ENCODE measurements at regions of chr10 and their contacts with region 1.

Region 1: GRCh38 chr10:72260588-72261322 is 13.0 kb upstream of the DDIT4 start:
- DNase-seq: peak; percentile 98
- ATAC-seq: peak; percentile 88
- H3K4me3 Mint-ChIP-seq: peak overlapping the region; percentile 64
- H3K27ac Mint-ChIP-seq: peak overlapping the region; percentile 99
- H3K4me1 Mint-ChIP-seq: peaks cover 70% of the 10 kb centered on the region
- H3K27me3 Mint-ChIP-seq: no peaks in the 10 kb centered on the region; the same call in 1 of the 2 replicates
- CTCF ChIP-seq: no peak

Region 2: DNA sequence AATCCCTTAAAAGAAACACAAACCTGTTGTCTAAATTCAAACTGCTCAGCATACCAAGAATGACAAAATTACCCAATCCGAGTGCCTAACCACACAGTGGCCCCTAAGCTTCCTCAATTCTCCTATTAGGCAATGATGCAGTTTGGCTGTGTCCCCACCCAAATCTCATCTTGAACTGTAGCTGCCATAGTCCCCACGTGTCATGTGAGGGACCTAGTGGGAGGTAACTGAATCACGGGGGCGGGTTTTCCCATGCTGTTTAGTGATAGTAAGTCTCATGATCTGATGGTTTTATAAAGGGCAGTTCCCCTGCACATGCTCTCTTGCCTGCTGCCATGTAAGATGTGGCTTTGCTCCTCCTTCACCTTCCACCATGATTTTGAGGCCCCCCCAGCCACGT is 431.6 kb before region 1 on chr10:
- CTCF ChIA-PET with region 1: no interaction called
- POLR2A ChIA-PET with region 1: no interaction called
- DNase-seq: no peak
- ATAC-seq: no peak
- H3K4me3 Mint-ChIP-seq: no peak overlapping the region
- H3K27ac Mint-ChIP-seq: no peak overlapping the region
- H3K4me1 Mint-ChIP-seq: peaks cover 20% of the 10 kb centered on the region
- H3K27me3 Mint-ChIP-seq: no peaks in the 10 kb centered on the region
- CTCF ChIP-seq: no peak

Region 3: GRCh38 chr10:72215652-72216549 is 44.9 kb before region 1 on chr10 and contains the starts of genes ANAPC16 and ASCC1:
- CTCF ChIA-PET with region 1: interaction called, 4 read pairs
- POLR2A ChIA-PET with region 1: interaction called, 23 read pairs
- DNase-seq: peak; percentile 94
- ATAC-seq: peak; percentile 92
- H3K4me3 Mint-ChIP-seq: peak within 1 kb of the TSS; percentile 97
- H3K27ac Mint-ChIP-seq: peak within 1 kb of the TSS; percentile 100
- H3K4me1 Mint-ChIP-seq: peaks cover 23% of the 10 kb centered on the region
- H3K27me3 Mint-ChIP-seq: no peaks in the 10 kb centered on the region; the same call in 1 of the 2 replicates
- CTCF ChIP-seq: no peak
- total RNA-seq, gene ANAPC16: 52.3 to 72.4 TPM (median 72.3 TPM) in 3 replicates
- total RNA-seq, gene ASCC1: 30.4 to 38.7 TPM (median 32.5 TPM) in 3 replicates

Region 4: GRCh38 chr10:72238392-72239175 is 22.2 kb before region 1 on chr10:
- CTCF ChIA-PET with region 1: interaction called, 10 read pairs
- POLR2A ChIA-PET with region 1: interaction called, 6 read pairs
- DNase-seq: no peak
- ATAC-seq: no peak
- H3K4me3 Mint-ChIP-seq: no peak overlapping the region
- H3K27ac Mint-ChIP-seq: no peak overlapping the region
- H3K4me1 Mint-ChIP-seq: peaks cover 16% of the 10 kb centered on the region
- H3K27me3 Mint-ChIP-seq: no peaks in the 10 kb centered on the region
- CTCF ChIP-seq: no peak

Region 5: DNA sequence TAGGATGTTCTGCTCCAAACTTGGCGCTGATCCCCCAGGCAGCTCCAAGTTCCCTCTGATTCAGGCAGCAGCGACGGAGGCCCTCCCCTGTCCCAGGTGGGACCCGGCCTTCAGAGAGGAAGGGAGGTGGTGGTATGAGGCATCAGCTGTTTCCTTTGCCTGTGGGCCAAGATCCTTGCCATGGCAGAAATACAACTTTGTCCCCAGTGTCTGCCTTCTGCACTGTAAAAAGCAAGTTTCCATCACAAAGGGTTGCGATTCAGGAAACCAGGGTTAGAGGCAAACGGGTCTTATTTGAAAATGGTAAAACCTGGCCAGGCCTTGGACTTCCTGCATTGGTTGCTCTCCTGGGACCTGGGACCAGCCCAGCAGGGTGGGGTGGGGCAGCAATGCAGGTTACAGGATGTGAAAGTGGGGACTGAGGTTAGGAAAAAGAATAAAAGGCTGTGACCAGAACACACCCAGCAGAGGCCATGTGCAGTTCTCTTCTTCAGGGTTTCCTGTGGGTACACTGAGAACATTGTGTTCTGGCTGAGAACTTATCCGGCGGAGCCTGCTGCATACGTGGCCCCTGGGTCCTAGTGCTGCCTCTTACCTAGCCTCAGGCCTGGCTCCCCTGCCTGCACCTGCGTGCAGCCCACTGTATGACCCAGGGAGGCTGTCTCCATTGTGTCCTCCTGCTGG is 12.1 kb before region 1 on chr10:
- CTCF ChIA-PET with region 1: interaction called, 22 read pairs
- POLR2A ChIA-PET with region 1: interaction called, 13 read pairs
- DNase-seq: peak; percentile 56
- ATAC-seq: peak; percentile 88
- H3K4me3 Mint-ChIP-seq: peak overlapping the region; percentile 44
- H3K27ac Mint-ChIP-seq: peak overlapping the region; percentile 89
- H3K4me1 Mint-ChIP-seq: peaks cover 26% of the 10 kb centered on the region
- H3K27me3 Mint-ChIP-seq: no peaks in the 10 kb centered on the region
- CTCF ChIP-seq: no peak

Region 6: GRCh38 chr10:72331601-72332422 is 71.1 kb after region 1 on chr10:
- CTCF ChIA-PET with region 1: interaction called, 15 read pairs
- POLR2A ChIA-PET with region 1: interaction called, 5 read pairs
- DNase-seq: peak; percentile 81
- ATAC-seq: peak; percentile 88
- H3K4me3 Mint-ChIP-seq: peak overlapping the region; percentile 54
- H3K27ac Mint-ChIP-seq: peak overlapping the region; percentile 92
- H3K4me1 Mint-ChIP-seq: peaks cover 48% of the 10 kb centered on the region
- H3K27me3 Mint-ChIP-seq: no peaks in the 10 kb centered on the region
- CTCF ChIP-seq: no peak

Measured in WTC11 (cell line).